Esophagus squamous epithelium (tissue), 5 donors: ENCODE measurements at regions of chr5 and their contacts with region 1.

Region 1: DNA sequence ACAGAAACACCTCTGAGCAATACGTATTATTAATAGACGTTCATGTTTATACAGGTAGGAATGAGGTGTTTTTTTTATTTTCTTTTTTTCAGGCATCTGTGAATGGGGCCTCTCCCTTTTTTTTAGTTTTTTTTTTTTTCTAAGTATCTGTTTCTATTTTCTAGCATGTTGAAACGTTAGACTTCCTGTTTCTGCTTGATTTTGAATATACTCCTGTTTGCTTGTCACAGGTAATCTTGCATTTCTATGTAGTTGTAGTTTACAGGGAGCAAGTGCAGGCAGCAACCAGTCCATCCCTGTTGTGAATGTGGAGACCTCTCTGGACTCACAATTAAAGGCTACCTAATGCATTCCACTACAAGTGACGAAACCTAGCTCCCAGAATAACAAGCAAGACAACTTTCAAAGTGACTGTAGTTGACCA is 22.8 kb upstream of the TNFAIP8 start:
- DNase-seq: no peak
- H3K4me3 ChIP-seq: peak overlapping the region; percentile 30 to 60 (median 46)
- H3K27ac ChIP-seq: peak overlapping the region; percentile 84 to 89 (median 88)
- H3K4me1 ChIP-seq: peaks cover 26 to 98% (median 53%) of the 10 kb centered on the region in 3 donors
- H3K27me3 ChIP-seq: no peaks in the 10 kb centered on the region
- CTCF ChIP-seq: no peak
- POLR2A ChIP-seq: peak in 1 of 4 donors; percentile 42

Region 2: GRCh38 chr5:119070828-119071572 is 262.0 kb before region 1 on chr5 and contains the start of gene DMXL1:
- intact Hi-C with region 1: loop called (anchors 10 kb)
- DNase-seq: peak; percentile 96
- H3K4me3 ChIP-seq: peak within 1 kb of the TSS; percentile 67 to 92 (median 89)
- H3K27ac ChIP-seq: peak within 1 kb of the TSS; percentile 92 to 98 (median 98)
- H3K4me1 ChIP-seq: peaks cover 9 to 53% (median 17%) of the 10 kb centered on the region in 3 donors
- H3K27me3 ChIP-seq: no peaks in the 10 kb centered on the region
- CTCF ChIP-seq: peak in 2 of 6 experiments; percentile 3 to 7
- POLR2A ChIP-seq: peak in 2 of 4 donors; percentile 78
- total RNA-seq, gene DMXL1: 25.9 to 50.9 (median 30.9) TPM

Region 3: DNA sequence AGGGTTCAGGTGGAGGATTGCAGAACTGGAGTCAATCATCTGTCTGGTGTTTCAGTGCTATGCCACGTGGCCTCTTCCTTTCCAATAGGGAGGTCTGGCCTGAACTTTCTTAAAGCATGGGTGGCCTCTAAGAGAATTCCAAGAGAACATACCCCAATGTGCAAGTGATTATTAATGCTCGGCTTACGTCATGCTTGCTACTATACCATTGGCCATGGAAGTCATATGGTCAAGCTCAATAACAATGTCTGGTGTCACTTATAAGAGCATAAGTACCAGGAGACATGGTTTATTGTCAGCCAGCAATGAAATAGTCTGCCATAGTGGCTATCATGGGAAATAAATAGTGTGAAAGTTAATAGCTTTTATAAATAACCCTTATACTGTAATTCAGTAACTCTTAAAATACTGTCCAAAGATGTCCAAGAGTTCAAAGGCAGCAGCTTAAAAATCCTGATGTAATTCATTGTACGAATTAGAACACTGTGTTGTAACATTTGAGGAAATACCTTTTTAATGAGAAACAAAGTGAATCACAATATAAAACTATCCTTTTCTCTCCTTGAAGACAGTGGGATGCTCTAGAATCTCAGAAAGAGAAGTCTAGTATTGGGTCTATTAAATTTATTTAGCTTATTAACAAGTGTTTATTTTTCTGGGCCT is 775.7 kb after region 1 on chr5:
- intact Hi-C with region 1: no loop called
- DNase-seq: no peak
- H3K4me3 ChIP-seq: no peak overlapping the region
- H3K27ac ChIP-seq: no peak overlapping the region
- H3K4me1 ChIP-seq: no peaks in the 10 kb centered on the region
- H3K27me3 ChIP-seq: no peaks in the 10 kb centered on the region
- CTCF ChIP-seq: no peak
- POLR2A ChIP-seq: no peak